ENCODE measurements at regions of chr1 and their contacts with region 1.

Region 1: DNA sequence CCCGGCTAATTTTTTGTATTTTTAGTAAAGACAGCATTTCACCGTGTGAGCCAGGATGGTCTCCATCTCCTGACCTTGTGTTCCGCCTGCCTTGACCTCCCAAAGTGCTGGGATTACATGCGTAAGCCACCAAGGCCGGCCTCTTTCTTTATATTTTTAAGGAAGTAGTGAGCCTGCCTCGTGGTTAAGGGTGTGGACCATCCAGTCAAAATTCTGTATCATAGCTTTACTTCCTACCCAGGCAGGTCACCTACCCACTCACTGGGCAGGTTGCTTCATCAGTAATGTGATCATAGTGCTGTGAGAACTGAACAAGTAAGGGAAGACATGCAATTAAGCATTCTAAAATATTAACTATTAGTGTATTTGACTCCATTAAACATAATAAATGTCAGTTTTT is 8.1 kb upstream of the ACOT7 start:
- H3K4me3 ChIP-seq: no peak overlapping the region
- H3K27ac ChIP-seq: no peak overlapping the region
- H3K4me1 ChIP-seq: no peaks in the 10 kb centered on the region
- CTCF ChIP-seq: no peak

Region 2: GRCh38 chr1:6343506-6344405 is 57.9 kb before region 1 on chr1:
- CTCF ChIA-PET with region 1: interaction called, 23 read pairs
- POLR2A ChIA-PET with region 1: interaction called, 3 read pairs
- H3K4me3 ChIP-seq: no peak overlapping the region
- H3K27ac ChIP-seq: no peak overlapping the region
- H3K4me1 ChIP-seq: no peaks in the 10 kb centered on the region
- CTCF ChIP-seq: peak; percentile 93

Region 3: GRCh38 chr1:6378096-6378746 is 23.5 kb before region 1 on chr1:
- CTCF ChIA-PET with region 1: interaction called, 13 read pairs
- POLR2A ChIA-PET with region 1: no interaction called
- H3K4me3 ChIP-seq: no peak overlapping the region
- H3K27ac ChIP-seq: 0 out of 2 replicates have a peak overlapping the region, but pooled peaks have one; percentile 17
- H3K4me1 ChIP-seq: no peaks in the 10 kb centered on the region
- CTCF ChIP-seq: peak; percentile 32; the same call in 1 of the 2 replicates

Region 4: DNA sequence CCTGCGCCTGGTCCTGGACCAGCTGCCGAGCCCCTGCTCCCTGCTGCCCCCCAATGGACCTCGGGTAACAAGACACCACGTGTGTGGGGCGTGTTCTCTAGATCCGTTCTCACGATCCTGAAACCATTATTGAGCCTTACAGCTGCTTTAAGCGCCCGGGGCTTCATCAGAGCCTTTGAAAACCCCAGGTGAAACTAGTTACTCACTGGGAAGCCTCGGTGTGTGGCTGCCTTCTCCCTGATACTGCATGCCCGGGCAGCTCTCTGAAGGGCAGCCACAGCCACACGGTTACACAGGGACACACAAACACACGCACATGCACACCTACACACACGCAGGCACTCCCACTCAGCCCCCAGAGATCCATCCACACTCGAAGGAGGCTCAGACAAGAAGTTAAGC is 12.8 kb after region 1 on chr1:
- CTCF ChIA-PET with region 1: interaction called, 13 read pairs
- POLR2A ChIA-PET with region 1: no interaction called
- H3K4me3 ChIP-seq: no peak overlapping the region
- H3K27ac ChIP-seq: peak overlapping the region; percentile 26; the same call in 1 of the 2 replicates
- H3K4me1 ChIP-seq: no peaks in the 10 kb centered on the region; the same call in 1 of the 2 replicates
- CTCF ChIP-seq: peak; percentile 84

Region 5: DNA sequence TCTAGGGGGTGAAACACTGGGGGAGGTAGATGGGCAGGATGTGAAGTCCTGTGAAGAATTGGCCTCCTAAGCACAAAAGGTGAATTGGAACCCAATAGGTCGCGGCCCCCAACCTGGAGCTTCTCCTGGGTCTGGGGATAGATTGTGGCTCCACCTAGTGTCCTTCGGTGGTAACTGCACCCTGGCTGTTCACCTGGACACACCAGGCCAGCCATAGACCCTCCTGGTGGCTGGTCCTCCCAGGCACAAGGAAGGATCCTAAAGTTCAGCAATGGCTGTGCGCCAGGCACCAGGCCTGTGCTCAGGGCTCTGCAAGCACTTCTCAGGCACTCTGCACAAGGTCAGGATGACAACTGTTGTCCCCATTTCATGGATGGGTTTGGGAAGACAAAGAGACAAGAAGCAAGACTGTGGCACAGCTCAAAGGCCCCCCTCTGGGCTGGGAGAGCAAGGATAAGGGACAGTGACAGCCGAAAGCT is 36.4 kb after region 1 on chr1:
- CTCF ChIA-PET with region 1: interaction called, 24 read pairs
- POLR2A ChIA-PET with region 1: no interaction called
- H3K4me3 ChIP-seq: no peak overlapping the region
- H3K27ac ChIP-seq: no peak overlapping the region
- H3K4me1 ChIP-seq: no peaks in the 10 kb centered on the region
- CTCF ChIP-seq: peak; percentile 77

Region 6: DNA sequence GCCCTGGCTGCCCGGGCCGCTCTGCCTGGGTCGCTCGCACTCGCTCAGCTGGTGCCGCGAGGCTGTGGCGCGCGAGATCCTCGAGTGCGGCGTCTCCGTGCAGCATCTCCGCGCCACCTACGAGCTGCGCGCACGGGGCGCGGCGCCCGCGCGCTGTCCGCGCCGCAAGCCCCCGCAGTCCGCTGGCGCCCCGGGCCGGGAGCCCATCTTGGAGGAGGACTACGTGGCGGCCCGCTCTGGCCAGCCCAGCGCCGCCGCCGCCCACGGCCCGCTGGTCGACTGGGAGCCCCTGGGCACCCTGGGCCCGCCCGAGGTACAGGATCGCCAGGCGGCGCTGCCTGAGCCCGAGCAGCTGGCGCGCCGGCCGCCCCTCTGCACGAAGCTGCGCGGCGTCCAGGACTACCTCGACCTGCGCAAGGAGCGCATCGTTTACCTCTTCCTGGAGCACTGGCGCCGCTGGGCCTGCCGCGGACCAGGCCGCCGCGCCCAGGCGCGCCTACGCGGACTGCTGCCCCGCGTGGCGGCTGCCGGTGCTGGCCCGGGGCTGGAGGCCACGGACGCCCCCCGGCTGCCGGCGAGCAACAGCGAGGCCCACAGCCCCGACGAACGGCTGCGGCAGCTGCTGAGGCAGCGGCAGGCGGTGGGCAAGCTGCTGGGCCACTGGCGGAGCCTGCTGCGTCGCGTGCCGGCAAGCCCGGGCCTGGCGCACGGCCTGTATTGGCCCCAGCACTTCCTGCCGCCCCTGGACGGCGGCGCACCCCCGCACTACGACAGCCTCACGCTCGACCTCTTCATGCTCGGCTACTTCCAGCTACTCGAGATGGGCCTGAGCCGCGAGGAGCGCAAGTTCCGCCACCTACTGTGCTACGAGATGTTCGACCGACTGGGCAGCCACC is 53.4 kb after region 1 on chr1:
- CTCF ChIA-PET with region 1: no interaction called
- POLR2A ChIA-PET with region 1: no interaction called
- H3K4me3 ChIP-seq: no peak overlapping the region
- H3K27ac ChIP-seq: no peak overlapping the region
- H3K4me1 ChIP-seq: no peaks in the 10 kb centered on the region
- CTCF ChIP-seq: no peak

Measured in HEK293 (cell line).